ENCODE measurements at regions of chr2 and their contacts with region 1.

Region 1: DNA sequence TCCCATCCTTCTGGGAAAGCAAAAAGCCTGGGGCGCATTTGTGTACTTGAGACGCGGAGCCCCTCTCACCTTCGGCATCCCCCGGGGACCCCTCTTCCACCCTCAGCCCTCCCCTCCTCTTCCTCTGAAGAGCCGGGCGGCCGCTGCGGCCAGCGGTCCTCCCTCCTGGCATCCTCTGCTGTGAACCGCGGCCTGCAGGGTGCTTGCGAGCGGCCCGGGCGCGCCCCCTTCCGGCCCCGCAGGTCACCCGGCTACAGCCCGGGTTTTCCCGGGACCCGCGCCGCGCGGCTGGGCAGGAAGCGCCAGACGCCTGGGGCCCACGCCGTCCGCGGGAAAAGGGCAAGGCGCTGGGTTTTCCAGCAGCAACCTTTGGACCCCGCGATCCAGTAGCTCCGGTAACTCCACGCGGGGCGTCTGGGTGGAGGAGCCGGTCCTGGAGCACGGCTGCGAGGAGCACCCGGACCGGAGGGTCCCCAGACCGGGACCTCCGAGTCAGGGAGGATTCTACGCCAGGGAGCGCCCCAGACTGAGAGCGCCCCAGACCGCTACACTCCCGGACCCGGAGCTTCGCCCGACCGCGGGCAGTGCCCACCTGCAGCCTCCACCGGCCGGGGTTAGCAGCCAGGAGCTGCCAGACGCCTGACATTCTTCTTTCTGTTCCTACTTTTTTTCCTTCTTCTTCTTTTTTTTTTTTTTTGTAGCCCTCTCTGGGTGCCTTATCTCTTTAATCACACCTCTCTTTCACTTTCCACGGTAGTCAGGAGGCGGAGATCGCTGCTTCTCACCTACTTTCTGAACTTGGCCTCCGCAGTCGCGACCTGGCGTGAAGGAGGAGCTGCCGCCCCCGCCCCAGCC is at the start of gene IL18R1:
- DNase-seq: peak; percentile 37 to 85 (median 57)
- ATAC-seq: peak; percentile 93
- H3K4me3 ChIP-seq: peak within 1 kb of the TSS; percentile 82
- H3K4me3 Mint-ChIP-seq: peak within 1 kb of the TSS; percentile 93 to 99 (median 96)
- H3K27ac ChIP-seq: peak within 1 kb of the TSS; percentile 79
- H3K27ac Mint-ChIP-seq: peak within 1 kb of the TSS; percentile 83 to 96 (median 92)
- H3K4me1 ChIP-seq: peaks cover 6 to 19% of the 10 kb centered on the region in 2 donors
- H3K4me1 Mint-ChIP-seq: peaks cover 17 to 48% (median 37%) of the 10 kb centered on the region in 7 donors
- H3K27me3 ChIP-seq: no peaks in the 10 kb centered on the region
- H3K27me3 Mint-ChIP-seq: no peaks in the 10 kb centered on the region
- total RNA-seq, gene IL18R1: 2.1 to 52.8 (median 5.3) TPM

Region 2: DNA sequence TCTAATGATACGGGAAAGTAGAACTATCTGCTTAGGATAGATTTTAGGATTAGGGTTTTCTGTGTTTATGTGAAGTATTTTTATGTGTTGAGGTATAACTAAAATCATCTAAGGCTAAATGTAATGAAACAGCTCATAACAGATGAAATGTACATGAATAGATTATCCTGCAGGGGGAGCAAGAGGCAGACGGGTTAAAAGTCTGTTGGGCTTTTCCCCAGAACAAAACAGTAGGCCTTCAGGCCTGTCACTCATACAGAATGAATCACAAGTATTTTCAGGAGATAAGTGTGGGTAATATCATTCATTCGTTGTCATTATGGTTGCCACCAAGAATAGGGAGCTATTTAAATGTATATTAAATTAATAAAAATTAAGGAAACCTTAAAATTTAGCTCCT is 471.9 kb before region 1 on chr2:
- CTCF ChIA-PET with region 1: no interaction called
- POLR2A ChIA-PET with region 1: no interaction called
- intact Hi-C with region 1: loop called in 1 of 2 experiments (anchors 10 kb)
- DNase-seq: peak in 5 of 9 donors; percentile 28 to 45 (median 36)
- ATAC-seq: peak; percentile 87
- H3K4me3 ChIP-seq: no peak overlapping the region
- H3K4me3 Mint-ChIP-seq: no peak overlapping the region
- H3K27ac ChIP-seq: no peak overlapping the region
- H3K27ac Mint-ChIP-seq: peak overlapping the region in 4 of 9 donors; percentile 38 to 62 (median 52)
- H3K4me1 ChIP-seq: no peaks in the 10 kb centered on the region
- H3K4me1 Mint-ChIP-seq: peaks cover 0 to 16% (median 5%) of the 10 kb centered on the region in 7 donors
- H3K27me3 ChIP-seq: no peaks in the 10 kb centered on the region
- H3K27me3 Mint-ChIP-seq: no peaks in the 10 kb centered on the region

Region 3: DNA sequence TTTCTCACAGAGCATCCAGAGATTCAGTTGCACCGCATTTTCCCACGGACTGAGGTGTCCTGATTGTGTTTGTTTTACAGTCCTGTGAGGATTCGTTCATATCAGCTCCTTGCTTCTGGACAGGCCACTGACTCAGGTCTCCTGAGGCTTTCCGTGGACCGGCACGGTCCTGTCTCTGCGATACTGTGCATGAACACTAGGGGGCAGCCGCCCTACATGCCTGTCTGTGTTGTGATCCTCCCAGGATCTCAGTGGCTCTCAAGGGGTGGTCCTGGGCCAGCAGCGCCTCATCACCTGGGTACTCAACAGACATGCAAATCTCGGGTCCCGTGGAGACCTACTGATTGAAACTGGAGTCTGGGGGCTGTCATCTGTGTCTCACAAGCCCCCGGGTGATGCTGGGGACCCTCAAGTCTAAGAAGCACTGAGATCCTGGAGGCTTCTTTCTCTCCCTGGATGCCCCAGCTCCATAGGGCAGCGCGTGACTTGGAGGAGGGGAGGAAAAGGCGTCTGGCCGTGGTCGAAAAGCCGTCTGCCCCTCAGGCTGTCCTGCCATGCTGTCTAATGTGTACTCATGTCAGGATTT is 335.1 kb before region 1 on chr2:
- CTCF ChIA-PET with region 1: interaction called, 3 read pairs
- POLR2A ChIA-PET with region 1: no interaction called
- intact Hi-C with region 1: loop called (anchors 1 kb)
- DNase-seq: peak; percentile 61 to 82 (median 76)
- ATAC-seq: peak; percentile 96
- H3K4me3 ChIP-seq: no peak overlapping the region
- H3K4me3 Mint-ChIP-seq: no peak overlapping the region
- H3K27ac ChIP-seq: no peak overlapping the region
- H3K27ac Mint-ChIP-seq: no peak overlapping the region
- H3K4me1 ChIP-seq: no peaks in the 10 kb centered on the region
- H3K4me1 Mint-ChIP-seq: peaks cover 0 to 12% (median 0%) of the 10 kb centered on the region in 7 donors
- H3K27me3 ChIP-seq: no peaks in the 10 kb centered on the region
- H3K27me3 Mint-ChIP-seq: peaks cover 0 to 5% (median 0%) of the 10 kb centered on the region in 5 donors

Region 4: GRCh38 chr2:102321941-102322719 is 33.6 kb before region 1 on chr2:
- CTCF ChIA-PET with region 1: no interaction called
- POLR2A ChIA-PET with region 1: no interaction called
- intact Hi-C with region 1: no loop called
- DNase-seq: no peak
- ATAC-seq: no peak
- H3K4me3 ChIP-seq: no peak overlapping the region
- H3K4me3 Mint-ChIP-seq: no peak overlapping the region
- H3K27ac ChIP-seq: no peak overlapping the region
- H3K27ac Mint-ChIP-seq: no peak overlapping the region
- H3K4me1 ChIP-seq: no peaks in the 10 kb centered on the region
- H3K4me1 Mint-ChIP-seq: no peaks in the 10 kb centered on the region
- H3K27me3 ChIP-seq: no peaks in the 10 kb centered on the region
- H3K27me3 Mint-ChIP-seq: peaks cover 0 to 5% (median 3%) of the 10 kb centered on the region in 5 donors

Region 5: GRCh38 chr2:102366406-102367112 is 10.8 kb after region 1 on chr2:
- CTCF ChIA-PET with region 1: interaction called, 4 read pairs
- POLR2A ChIA-PET with region 1: interaction called, 8 read pairs
- intact Hi-C with region 1: loop called (anchors 1 kb)
- DNase-seq: peak in 6 of 9 donors; percentile 12 to 46 (median 32)
- ATAC-seq: peak; percentile 37
- H3K4me3 ChIP-seq: peak overlapping the region; percentile 39
- H3K4me3 Mint-ChIP-seq: peak overlapping the region; percentile 53 to 79 (median 72)
- H3K27ac ChIP-seq: peak overlapping the region; percentile 56
- H3K27ac Mint-ChIP-seq: peak overlapping the region; percentile 77 to 95 (median 88)
- H3K4me1 ChIP-seq: peaks cover 25 to 40% of the 10 kb centered on the region in 2 donors
- H3K4me1 Mint-ChIP-seq: peaks cover 33 to 74% (median 51%) of the 10 kb centered on the region in 7 donors
- H3K27me3 ChIP-seq: no peaks in the 10 kb centered on the region
- H3K27me3 Mint-ChIP-seq: no peaks in the 10 kb centered on the region

Region 6: DNA sequence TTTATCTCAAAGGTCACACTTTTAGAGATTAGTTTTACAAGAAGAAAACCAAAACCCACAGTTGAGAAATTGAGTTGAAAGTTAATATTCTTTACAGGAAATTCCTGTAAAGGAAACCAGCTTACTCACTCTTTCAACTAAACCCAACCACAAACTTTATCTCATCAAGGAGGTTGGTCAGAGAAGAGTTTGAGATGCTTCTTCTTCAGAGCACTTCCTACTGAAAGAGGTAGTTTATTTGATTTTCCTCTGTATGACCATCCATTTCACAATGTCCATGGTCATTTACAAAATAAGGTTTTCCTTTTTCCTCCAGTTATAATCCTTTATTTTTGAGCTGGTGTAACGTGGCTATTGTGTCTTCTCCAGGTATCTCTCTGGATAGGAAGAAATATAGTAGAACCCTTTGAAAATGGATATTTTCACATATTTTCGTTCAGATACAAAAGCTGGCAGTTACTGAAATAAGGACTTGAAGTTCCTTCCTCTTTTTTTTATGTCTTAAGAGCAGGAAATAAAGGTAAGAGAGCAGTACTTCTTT is 62.7 kb after region 1 on chr2:
- CTCF ChIA-PET with region 1: no interaction called
- POLR2A ChIA-PET with region 1: no interaction called
- intact Hi-C with region 1: loop called in 1 of 2 experiments (anchors 1 kb)
- DNase-seq: peak in 6 of 9 donors; percentile 24 to 59 (median 49)
- ATAC-seq: peak; percentile 85
- H3K4me3 ChIP-seq: peak overlapping the region; percentile 18
- H3K4me3 Mint-ChIP-seq: peak overlapping the region; percentile 38 to 87 (median 74)
- H3K27ac ChIP-seq: no peak overlapping the region
- H3K27ac Mint-ChIP-seq: peak overlapping the region in 7 of 9 donors; percentile 64 to 95 (median 78)
- H3K4me1 ChIP-seq: peaks cover 29 to 49% of the 10 kb centered on the region in 2 donors
- H3K4me1 Mint-ChIP-seq: peaks cover 27 to 67% (median 48%) of the 10 kb centered on the region in 7 donors
- H3K27me3 ChIP-seq: no peaks in the 10 kb centered on the region
- H3K27me3 Mint-ChIP-seq: no peaks in the 10 kb centered on the region

Region 7: DNA sequence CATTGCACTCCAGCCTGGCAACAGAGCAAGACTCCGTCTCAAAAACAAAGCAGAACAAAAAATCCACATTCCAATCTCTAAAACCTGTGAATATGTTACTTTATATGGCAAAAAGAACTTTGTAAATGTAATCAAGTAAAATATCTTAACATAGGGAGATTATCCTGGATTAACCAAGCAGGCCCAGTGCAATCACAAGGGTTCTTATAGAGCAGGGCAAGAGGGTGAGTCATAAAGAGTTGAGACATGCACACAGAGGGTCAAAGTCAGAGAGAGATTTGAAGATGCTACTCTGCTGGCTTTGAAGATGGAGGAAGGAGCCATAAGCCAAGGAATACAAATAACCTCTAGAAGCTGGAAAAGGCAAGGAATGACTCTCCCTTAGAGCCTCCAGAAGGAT is 202.7 kb after region 1 on chr2:
- CTCF ChIA-PET with region 1: no interaction called
- POLR2A ChIA-PET with region 1: no interaction called
- intact Hi-C with region 1: no loop called
- DNase-seq: no peak
- ATAC-seq: no peak
- H3K4me3 ChIP-seq: no peak overlapping the region
- H3K4me3 Mint-ChIP-seq: no peak overlapping the region
- H3K27ac ChIP-seq: no peak overlapping the region
- H3K27ac Mint-ChIP-seq: no peak overlapping the region
- H3K4me1 ChIP-seq: no peaks in the 10 kb centered on the region
- H3K4me1 Mint-ChIP-seq: no peaks in the 10 kb centered on the region
- H3K27me3 ChIP-seq: no peaks in the 10 kb centered on the region
- H3K27me3 Mint-ChIP-seq: peaks cover 0 to 3% (median 0%) of the 10 kb centered on the region in 5 donors

Region 8: DNA sequence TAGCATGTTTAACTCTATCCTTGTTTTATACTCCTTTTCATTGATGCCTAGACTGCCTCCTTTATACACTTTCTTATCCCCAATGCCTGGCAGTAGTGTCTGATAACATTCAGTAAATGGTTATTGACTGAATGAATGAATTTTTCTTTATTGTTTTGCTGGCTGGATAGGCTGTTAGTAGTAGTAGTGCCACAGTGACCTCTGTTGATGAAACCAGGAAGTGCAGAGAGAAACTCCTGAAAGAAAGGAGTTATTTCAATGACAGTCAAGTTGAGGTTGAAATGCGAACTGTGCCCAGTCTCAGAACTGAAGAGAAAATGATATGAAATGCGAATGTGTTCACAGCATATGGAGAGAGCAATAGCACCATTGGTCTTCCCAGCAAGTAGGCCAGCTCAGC is 236.8 kb after region 1 on chr2:
- CTCF ChIA-PET with region 1: no interaction called
- POLR2A ChIA-PET with region 1: no interaction called
- intact Hi-C with region 1: no loop called
- DNase-seq: no peak
- ATAC-seq: no peak
- H3K4me3 ChIP-seq: no peak overlapping the region
- H3K4me3 Mint-ChIP-seq: no peak overlapping the region
- H3K27ac ChIP-seq: no peak overlapping the region
- H3K27ac Mint-ChIP-seq: no peak overlapping the region
- H3K4me1 ChIP-seq: no peaks in the 10 kb centered on the region
- H3K4me1 Mint-ChIP-seq: no peaks in the 10 kb centered on the region
- H3K27me3 ChIP-seq: no peaks in the 10 kb centered on the region
- H3K27me3 Mint-ChIP-seq: peaks cover 8 to 34% (median 26%) of the 10 kb centered on the region in 5 donors

Measured in naive thymus-derived CD4-positive, alpha-beta T cell (primary cell).